Activated CD4-positive, alpha-beta T cell treated with anti-CD3 and anti-CD28 coated beads, Interleukin-2, amount 10 ng/mL, durations not matched to agents 7 days and 5 days (primary cell): ENCODE measurements at regions of chr19 and their contacts with region 1.

Region 1: GRCh38 chr19:49327878-49328544 is 3.0 kb upstream of the SLC6A16 start:
- DNase-seq: peak; percentile 61
- H3K4me3 Mint-ChIP-seq: no peak overlapping the region
- H3K27ac Mint-ChIP-seq: peak overlapping the region; percentile 4
- H3K4me1 Mint-ChIP-seq: peaks cover 56% of the 10 kb centered on the region
- H3K27me3 Mint-ChIP-seq: no peaks in the 10 kb centered on the region

Region 2: DNA sequence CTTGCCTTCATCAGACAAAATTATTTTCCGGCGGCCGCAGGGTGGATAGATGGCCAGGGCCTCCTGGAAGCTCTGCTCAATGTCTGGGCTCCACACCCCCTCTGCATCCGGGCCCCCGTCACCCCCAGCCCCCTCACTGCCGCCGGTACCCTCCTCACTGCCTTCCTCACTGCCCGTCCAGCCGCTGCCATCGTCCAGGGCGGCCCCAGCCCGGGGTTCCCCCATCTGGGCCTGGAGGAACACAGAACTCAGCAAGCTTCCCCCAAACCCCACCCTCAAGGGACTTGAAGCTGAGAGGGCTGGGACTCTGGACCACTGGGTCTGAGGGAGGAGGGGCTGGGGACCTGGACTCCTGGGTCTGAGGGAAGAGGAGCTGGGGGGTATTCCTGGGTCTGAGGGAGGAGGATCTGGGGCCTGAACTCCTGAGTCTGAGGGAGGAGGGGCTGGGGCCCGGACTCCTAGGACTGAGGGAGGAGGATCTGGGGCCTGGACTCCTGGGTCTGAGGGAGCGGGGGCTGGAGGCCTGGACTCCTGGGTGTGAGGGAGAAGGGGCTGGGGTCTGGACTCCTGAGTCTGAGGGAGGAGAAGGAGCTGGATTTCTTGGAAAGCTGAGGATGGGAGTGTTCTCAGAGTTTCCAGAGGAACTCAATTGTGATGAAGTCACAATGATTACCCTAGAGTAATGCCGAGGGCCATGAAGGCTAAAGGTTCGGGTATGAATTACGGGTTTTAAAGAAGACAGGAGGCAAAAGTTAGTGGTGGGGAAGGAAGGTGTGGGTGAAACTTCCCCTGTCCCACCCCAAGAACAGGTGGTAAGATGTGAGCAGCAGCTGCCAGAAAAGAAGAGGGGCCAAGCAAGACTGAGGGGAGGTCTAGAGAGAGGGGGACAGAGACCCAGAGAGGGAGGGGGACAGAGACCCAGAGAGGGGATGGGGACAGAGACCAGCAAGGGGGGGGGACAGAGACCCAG is 32.1 kb after region 1 on chr19:
- CTCF ChIA-PET with region 1: interaction called, 10 read pairs
- POLR2A ChIA-PET with region 1: no interaction called
- DNase-seq: no peak
- H3K4me3 Mint-ChIP-seq: no peak overlapping the region
- H3K27ac Mint-ChIP-seq: no peak overlapping the region
- H3K4me1 Mint-ChIP-seq: peaks cover 23% of the 10 kb centered on the region
- H3K27me3 Mint-ChIP-seq: peaks cover 40% of the 10 kb centered on the region

Region 3: GRCh38 chr19:49391581-49392399 is 63.8 kb after region 1 on chr19:
- CTCF ChIA-PET with region 1: no interaction called
- POLR2A ChIA-PET with region 1: no interaction called
- DNase-seq: peak; percentile 87
- H3K4me3 Mint-ChIP-seq: no peak overlapping the region
- H3K27ac Mint-ChIP-seq: no peak overlapping the region
- H3K4me1 Mint-ChIP-seq: peaks cover 31% of the 10 kb centered on the region
- H3K27me3 Mint-ChIP-seq: peaks cover 4% of the 10 kb centered on the region